Activated naive CD4-positive, alpha-beta T cell treated with anti-CD3 and anti-CD28 coated beads for 36 hours (primary cell): ENCODE measurements at regions of chr6 and their contacts with region 1.

Region 1: GRCh38 chr6:158686791-158687381 is 37.0 kb downstream of the SYTL3 start:
- DNase-seq: peak; percentile 58
- H3K4me3 Mint-ChIP-seq: no peak overlapping the region
- H3K27ac Mint-ChIP-seq: peak overlapping the region; percentile 81
- H3K4me1 Mint-ChIP-seq: peaks cover 70% of the 10 kb centered on the region
- H3K27me3 Mint-ChIP-seq: no peaks in the 10 kb centered on the region

Region 2: DNA sequence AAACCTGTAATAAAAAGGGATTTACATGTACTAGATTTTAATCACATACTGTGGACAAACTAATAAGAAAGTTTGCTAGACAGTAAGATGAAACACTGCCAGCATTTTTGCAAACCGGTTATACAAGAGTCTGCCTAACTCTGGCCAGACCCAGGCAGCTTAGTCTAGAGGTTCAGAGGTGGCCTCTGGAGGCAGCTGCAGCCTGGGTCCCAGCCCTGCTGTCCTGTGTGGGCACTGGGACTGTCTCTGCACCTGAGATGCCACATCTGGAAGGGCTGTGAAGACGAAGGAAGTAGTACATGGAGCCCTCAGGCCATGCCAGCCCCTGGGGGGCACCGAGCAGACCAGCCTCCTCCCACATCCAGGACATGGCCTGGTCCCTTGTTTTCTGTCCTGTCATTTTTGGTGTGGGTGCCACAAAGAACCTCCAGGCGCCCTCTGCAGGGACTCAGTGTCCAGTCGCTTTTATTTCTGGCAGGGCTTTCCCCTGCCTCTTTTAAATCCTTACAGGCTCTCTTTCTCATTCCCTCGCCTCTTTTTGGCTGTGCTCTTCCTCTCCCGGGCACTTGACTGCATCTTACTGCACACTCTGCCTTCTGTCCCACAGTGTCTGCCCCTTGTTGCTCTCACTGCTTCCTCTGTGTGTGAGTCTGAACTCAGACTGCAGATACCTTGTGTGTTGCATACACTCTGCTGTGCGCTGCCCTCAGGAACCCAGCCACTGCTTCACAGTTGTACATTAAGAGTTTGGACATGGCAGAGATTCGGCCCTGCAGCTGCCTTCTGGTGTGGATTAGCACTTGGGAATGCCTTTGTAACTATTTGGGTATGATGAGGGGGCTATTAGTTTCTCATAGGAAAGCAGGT is 1089.2 kb before region 1 on chr6:
- CTCF ChIA-PET with region 1: no interaction called
- intact Hi-C with region 1: no loop called
- DNase-seq: peak; percentile 69
- H3K4me3 Mint-ChIP-seq: no peak overlapping the region
- H3K27ac Mint-ChIP-seq: no peak overlapping the region
- H3K4me1 Mint-ChIP-seq: no peaks in the 10 kb centered on the region
- H3K27me3 Mint-ChIP-seq: no peaks in the 10 kb centered on the region

Region 3: GRCh38 chr6:158213925-158214674 is 472.8 kb before region 1 on chr6:
- CTCF ChIA-PET with region 1: interaction called, 13 read pairs
- intact Hi-C with region 1: loop called (anchors 2 kb)
- DNase-seq: peak; percentile 68
- H3K4me3 Mint-ChIP-seq: no peak overlapping the region
- H3K27ac Mint-ChIP-seq: no peak overlapping the region
- H3K4me1 Mint-ChIP-seq: peaks cover 8% of the 10 kb centered on the region
- H3K27me3 Mint-ChIP-seq: no peaks in the 10 kb centered on the region

Region 4: DNA sequence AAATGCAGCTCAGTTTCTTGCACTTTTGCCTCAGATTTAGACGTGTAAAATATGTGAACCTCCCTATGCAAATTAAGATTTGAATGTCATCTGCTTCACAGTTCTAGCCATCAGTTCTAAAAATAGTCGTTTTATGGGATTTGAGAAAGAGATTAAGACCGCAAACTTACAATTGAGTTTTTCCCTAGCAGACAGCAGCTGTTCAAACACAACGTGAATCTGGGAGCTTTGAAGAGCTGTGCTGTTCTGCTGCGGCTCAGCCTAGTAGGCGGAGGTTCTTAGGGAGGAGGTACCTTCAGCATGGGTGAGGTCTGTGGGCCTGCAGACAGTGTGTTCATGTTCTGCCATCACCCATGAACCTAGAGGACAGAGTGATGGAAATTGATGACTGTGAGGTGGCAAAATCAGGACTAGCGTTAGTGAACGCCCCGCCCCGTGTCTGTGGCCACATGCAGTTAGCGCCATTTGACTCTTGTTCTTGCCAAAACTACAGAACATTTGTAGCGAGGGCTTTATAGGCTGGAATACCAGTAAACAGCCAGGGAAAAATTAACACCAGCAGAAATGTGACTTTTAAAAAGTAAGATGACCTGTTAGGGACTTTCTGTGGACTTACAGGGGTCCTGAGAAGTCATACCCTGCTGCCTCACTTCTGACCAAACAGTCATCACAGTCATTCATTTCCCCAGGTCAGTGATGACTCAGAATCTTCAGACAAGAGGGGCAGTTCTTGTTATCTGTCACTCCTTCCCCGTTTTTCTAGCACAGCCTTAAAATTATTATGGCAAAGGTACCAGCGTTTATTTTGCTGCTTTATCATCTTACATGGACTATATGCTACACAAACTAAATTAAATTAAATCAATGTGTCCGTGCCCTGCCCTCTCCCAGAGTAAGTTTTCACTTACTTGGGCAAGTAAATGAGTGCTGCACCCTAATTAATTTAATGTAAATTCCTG is 211.3 kb before region 1 on chr6:
- CTCF ChIA-PET with region 1: interaction called, 11 read pairs
- intact Hi-C with region 1: no loop called
- DNase-seq: no peak
- H3K4me3 Mint-ChIP-seq: no peak overlapping the region
- H3K27ac Mint-ChIP-seq: no peak overlapping the region
- H3K4me1 Mint-ChIP-seq: no peaks in the 10 kb centered on the region
- H3K27me3 Mint-ChIP-seq: no peaks in the 10 kb centered on the region

Region 5: GRCh38 chr6:158506577-158506976 is 180.3 kb before region 1 on chr6:
- CTCF ChIA-PET with region 1: no interaction called
- intact Hi-C with region 1: no loop called
- DNase-seq: no peak
- H3K4me3 Mint-ChIP-seq: no peak overlapping the region
- H3K27ac Mint-ChIP-seq: no peak overlapping the region
- H3K4me1 Mint-ChIP-seq: no peaks in the 10 kb centered on the region
- H3K27me3 Mint-ChIP-seq: no peaks in the 10 kb centered on the region

Region 6: GRCh38 chr6:158611541-158612370 is 75.1 kb before region 1 on chr6:
- CTCF ChIA-PET with region 1: no interaction called
- intact Hi-C with region 1: no loop called
- DNase-seq: no peak
- H3K4me3 Mint-ChIP-seq: no peak overlapping the region
- H3K27ac Mint-ChIP-seq: no peak overlapping the region
- H3K4me1 Mint-ChIP-seq: no peaks in the 10 kb centered on the region
- H3K27me3 Mint-ChIP-seq: no peaks in the 10 kb centered on the region

Region 7: GRCh38 chr6:158639056-158639455 is 47.8 kb before region 1 on chr6:
- CTCF ChIA-PET with region 1: interaction called, 14 read pairs
- intact Hi-C with region 1: no loop called
- DNase-seq: no peak
- H3K4me3 Mint-ChIP-seq: no peak overlapping the region
- H3K27ac Mint-ChIP-seq: peak overlapping the region; percentile 84
- H3K4me1 Mint-ChIP-seq: peaks cover 72% of the 10 kb centered on the region
- H3K27me3 Mint-ChIP-seq: no peaks in the 10 kb centered on the region

Region 8: GRCh38 chr6:158660333-158660754 is 26.5 kb before region 1 on chr6:
- CTCF ChIA-PET with region 1: interaction called, 44 read pairs
- intact Hi-C with region 1: loop called (anchors 1 kb)
- DNase-seq: peak; percentile 68
- H3K4me3 Mint-ChIP-seq: no peak overlapping the region
- H3K27ac Mint-ChIP-seq: no peak overlapping the region
- H3K4me1 Mint-ChIP-seq: peaks cover 69% of the 10 kb centered on the region
- H3K27me3 Mint-ChIP-seq: no peaks in the 10 kb centered on the region

Region 9: DNA sequence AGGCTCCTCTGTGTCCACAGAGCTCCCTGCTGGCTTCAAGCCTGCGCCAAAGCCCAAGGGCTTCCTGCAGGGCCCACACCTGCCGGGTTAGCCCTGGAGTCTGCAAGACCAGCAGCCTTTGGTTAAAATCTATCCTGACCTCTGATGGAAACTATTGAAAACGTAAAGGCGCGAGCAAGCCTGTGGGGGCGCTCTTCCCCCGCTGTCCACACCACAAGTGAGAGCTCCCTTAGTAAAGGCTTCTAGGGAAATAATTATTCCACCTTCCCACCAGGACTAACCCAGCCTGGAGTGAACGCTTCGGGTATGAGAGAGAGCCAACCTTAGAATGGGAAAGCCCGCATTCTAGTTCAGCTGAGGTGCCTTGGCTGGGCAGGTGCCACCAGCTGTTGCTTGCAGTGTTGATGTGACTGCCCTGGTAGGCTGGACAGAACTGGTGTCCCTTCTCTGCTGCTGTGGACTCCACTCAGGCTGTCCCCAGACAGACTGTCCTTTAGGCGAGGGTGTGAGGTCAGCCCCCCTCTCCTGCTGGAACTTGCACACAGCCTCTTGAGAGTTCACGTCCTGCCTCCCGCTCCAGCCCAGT is 31.7 kb after region 1 on chr6:
- CTCF ChIA-PET with region 1: interaction called, 3 read pairs
- intact Hi-C with region 1: loop called (anchors 1 kb)
- DNase-seq: no peak
- H3K4me3 Mint-ChIP-seq: no peak overlapping the region
- H3K27ac Mint-ChIP-seq: no peak overlapping the region
- H3K4me1 Mint-ChIP-seq: peaks cover 37% of the 10 kb centered on the region
- H3K27me3 Mint-ChIP-seq: no peaks in the 10 kb centered on the region